Calu3 (cell line): ENCODE measurements at regions of chr13 and their contacts with region 1.

Region 1: GRCh38 chr13:111043575-111043982 is 71.5 kb upstream of the ARHGEF7 start:
- DNase-seq: peak; percentile 3
- H3K4me3 Mint-ChIP-seq: no peak overlapping the region
- H3K27ac Mint-ChIP-seq: no peak overlapping the region
- H3K4me1 Mint-ChIP-seq: peaks cover 13% of the 10 kb centered on the region
- H3K27me3 Mint-ChIP-seq: no peaks in the 10 kb centered on the region
- CTCF ChIP-seq: no peak

Region 2: GRCh38 chr13:111281751-111282311 is 238.3 kb after region 1 on chr13:
- CTCF ChIA-PET with region 1: interaction called, 11 read pairs
- intact Hi-C with region 1: no loop called
- DNase-seq: no peak
- H3K4me3 Mint-ChIP-seq: no peak overlapping the region
- H3K27ac Mint-ChIP-seq: no peak overlapping the region
- H3K4me1 Mint-ChIP-seq: no peaks in the 10 kb centered on the region
- H3K27me3 Mint-ChIP-seq: no peaks in the 10 kb centered on the region
- CTCF ChIP-seq: no peak

Region 3: GRCh38 chr13:111344471-111345191 is 301.1 kb after region 1 on chr13:
- CTCF ChIA-PET with region 1: no interaction called
- intact Hi-C with region 1: no loop called
- DNase-seq: no peak
- H3K4me3 Mint-ChIP-seq: no peak overlapping the region
- H3K27ac Mint-ChIP-seq: no peak overlapping the region
- H3K4me1 Mint-ChIP-seq: no peaks in the 10 kb centered on the region
- H3K27me3 Mint-ChIP-seq: no peaks in the 10 kb centered on the region
- CTCF ChIP-seq: no peak